HEK293T (cell line): ENCODE measurements at regions of chr15 and their contacts with region 1.

Region 1: GRCh38 chr15:48877630-48878595 is at the start of gene EID1:
- DNase-seq: peak; percentile 80

Region 2: DNA sequence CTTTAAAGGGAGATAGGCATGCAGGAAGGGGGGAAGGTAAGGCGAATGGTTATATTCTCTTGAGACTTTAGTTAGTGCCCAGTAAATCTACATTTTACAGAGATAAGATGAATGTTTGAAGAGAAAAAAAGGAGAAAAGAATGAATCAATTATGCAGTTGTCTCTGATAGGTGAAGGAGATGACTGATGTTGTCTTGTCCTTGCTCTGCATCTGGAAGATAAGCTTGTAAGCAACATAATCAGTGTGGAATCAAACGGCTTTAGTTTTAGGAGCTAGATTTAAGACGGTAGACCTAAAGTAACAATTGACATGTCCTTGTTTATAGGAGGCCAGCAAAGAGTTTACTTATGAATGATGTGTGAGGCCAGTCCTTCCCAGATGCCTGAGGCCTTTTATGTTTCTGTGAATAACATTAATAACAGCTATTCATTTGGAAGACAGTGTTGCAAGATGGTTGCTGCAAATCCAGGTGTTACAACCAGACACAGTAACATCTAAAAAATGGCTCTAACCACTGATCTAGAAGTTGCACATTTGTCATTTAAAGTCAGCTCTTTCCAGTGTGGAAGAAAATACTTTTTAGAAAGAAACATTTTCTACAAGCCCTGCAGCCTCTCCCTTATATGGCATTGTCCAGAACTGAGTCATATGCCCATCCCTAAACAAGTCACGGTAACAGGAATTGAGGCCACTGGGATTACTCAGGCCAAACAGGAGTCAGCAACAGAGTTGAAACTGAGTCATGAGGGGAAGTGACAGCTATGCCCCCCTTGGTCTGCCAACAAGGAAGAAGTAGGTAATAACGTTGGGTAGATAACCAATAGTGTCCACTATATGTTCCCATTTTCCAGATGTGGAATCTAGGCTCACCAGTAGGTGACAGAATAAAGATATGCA is 154.9 kb before region 1 on chr15:
- CTCF ChIA-PET with region 1: no interaction called
- POLR2A ChIA-PET with region 1: no interaction called
- DNase-seq: no peak

Region 3: GRCh38 chr15:48896869-48897814 is 19.2 kb after region 1 on chr15:
- CTCF ChIA-PET with region 1: no interaction called
- POLR2A ChIA-PET with region 1: interaction called, 51 read pairs
- DNase-seq: no peak

Region 4: GRCh38 chr15:48914717-48915116 is 36.8 kb after region 1 on chr15:
- CTCF ChIA-PET with region 1: no interaction called
- POLR2A ChIA-PET with region 1: interaction called, 12 read pairs
- DNase-seq: no peak

Region 5: DNA sequence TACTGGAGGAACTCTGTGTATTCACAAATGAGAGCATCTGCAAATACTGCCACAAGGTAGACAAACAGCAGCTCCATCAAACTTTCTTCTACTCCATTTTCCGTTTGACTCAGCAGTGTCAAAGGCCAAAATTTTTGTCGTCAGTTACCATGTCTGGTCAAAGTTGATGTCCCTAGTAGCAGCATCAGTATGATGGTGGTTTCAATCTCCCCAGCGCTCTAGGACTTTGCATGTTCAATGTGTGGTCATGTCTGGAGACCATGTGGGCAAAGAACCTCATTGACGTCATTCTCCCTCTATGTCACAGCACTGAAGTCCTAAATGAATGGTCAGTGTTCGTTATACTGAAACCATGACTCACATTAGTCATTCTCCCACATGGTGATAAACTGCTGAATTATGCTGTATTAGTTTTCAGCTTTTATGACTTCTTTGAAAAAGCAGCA is 62.6 kb after region 1 on chr15:
- CTCF ChIA-PET with region 1: no interaction called
- POLR2A ChIA-PET with region 1: interaction called, 10 read pairs
- DNase-seq: no peak

Region 6: GRCh38 chr15:48975472-48976419 is 97.8 kb after region 1 on chr15:
- CTCF ChIA-PET with region 1: interaction called, 4 read pairs
- POLR2A ChIA-PET with region 1: interaction called, 13 read pairs
- DNase-seq: peak; percentile 73